CD4-positive, alpha-beta memory T cell (primary cell): ENCODE measurements at regions of chr10 and their contacts with region 1.

Region 1: DNA sequence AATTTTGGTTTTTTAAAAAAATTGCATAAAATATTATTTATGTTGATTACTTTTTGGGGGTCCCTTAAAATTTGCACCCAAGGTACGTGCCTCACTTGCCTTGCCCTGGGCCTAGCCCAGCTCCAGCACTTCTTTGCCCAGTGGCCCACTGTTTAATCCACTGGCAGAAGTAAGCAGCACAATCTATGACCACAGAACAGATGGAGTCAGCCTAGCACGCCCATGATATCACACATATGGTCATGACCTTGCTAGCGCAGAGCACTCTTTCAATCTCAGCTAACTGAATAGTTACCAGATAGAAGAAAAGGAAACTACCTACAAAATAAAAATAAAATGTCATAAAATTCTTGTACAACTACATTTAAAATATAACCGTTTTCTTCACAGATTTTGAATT is 5.6 kb downstream of the OGA start:
- DNase-seq: no peak
- H3K4me3 ChIP-seq: no peak overlapping the region
- H3K4me3 Mint-ChIP-seq: peak overlapping the region in 5 of 8 donors; percentile 13 to 100 (median 44)
- H3K27ac ChIP-seq: no peak overlapping the region
- H3K27ac Mint-ChIP-seq: peak overlapping the region in 2 of 7 donors; percentile 29 to 91
- H3K4me1 ChIP-seq: peaks cover 61% of the 10 kb centered on the region
- H3K4me1 Mint-ChIP-seq: peaks cover 37 to 63% (median 44%) of the 10 kb centered on the region in 4 donors
- H3K27me3 ChIP-seq: no peaks in the 10 kb centered on the region
- H3K27me3 Mint-ChIP-seq: no peaks in the 10 kb centered on the region

Region 2: GRCh38 chr10:101797403-101798059 is 15.1 kb before region 1 on chr10:
- CTCF ChIA-PET with region 1: interaction called, 3 read pairs
- POLR2A ChIA-PET with region 1: interaction called, 30 read pairs
- intact Hi-C with region 1: loop called (anchors 2 kb)
- DNase-seq: no peak
- H3K4me3 ChIP-seq: no peak overlapping the region
- H3K4me3 Mint-ChIP-seq: no peak overlapping the region
- H3K27ac ChIP-seq: no peak overlapping the region
- H3K27ac Mint-ChIP-seq: peak overlapping the region in 4 of 7 donors; percentile 5 to 91 (median 27)
- H3K4me1 ChIP-seq: peaks cover 38% of the 10 kb centered on the region
- H3K4me1 Mint-ChIP-seq: peaks cover 22 to 35% (median 26%) of the 10 kb centered on the region in 4 donors
- H3K27me3 ChIP-seq: no peaks in the 10 kb centered on the region
- H3K27me3 Mint-ChIP-seq: no peaks in the 10 kb centered on the region